ENCODE measurements at regions of chr19 and their contacts with region 1.

Region 1: GRCh38 chr19:58097781-58098681 is at the start of gene ZSCAN18:
- DNase-seq: peak; percentile 98
- ATAC-seq: peak; percentile 100
- H3K4me3 ChIP-seq: peak within 1 kb of the TSS; percentile 94
- H3K27ac ChIP-seq: peak within 1 kb of the TSS; percentile 83
- H3K4me1 ChIP-seq: peaks cover 4% of the 10 kb centered on the region
- H3K27me3 ChIP-seq: peaks cover 0 to 2% (median 0%) of the 10 kb centered on the region in 3 donors
- CTCF ChIP-seq: no peak
- total RNA-seq, gene ZSCAN18: 13.1 to 36.8 (median 16.3) TPM

Region 2: DNA sequence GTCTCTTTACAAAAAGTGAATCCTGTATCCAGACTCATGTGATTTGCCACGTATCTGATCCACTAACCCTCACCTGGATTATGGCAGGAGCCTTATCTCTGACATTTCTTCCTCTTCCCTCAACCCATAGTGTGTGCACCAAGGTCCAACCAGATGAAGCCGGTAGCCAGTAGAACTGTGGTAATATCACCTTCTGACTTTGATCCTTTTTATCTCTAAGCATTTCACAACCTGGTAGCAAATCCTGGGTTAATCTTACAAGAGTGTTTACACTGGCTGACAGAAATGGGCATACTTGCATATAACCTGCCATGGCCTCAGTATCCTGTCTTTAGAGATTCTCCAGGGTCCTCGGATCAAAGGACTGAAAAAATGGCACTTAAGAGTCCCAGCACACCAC is 183.5 kb before region 1 on chr19:
- intact Hi-C with region 1: no loop called
- DNase-seq: no peak
- ATAC-seq: no peak
- H3K4me3 ChIP-seq: no peak overlapping the region
- H3K27ac ChIP-seq: no peak overlapping the region
- H3K4me1 ChIP-seq: peaks cover 9% of the 10 kb centered on the region
- H3K27me3 ChIP-seq: no peaks in the 10 kb centered on the region
- CTCF ChIP-seq: no peak

Region 3: GRCh38 chr19:58009666-58010371 is 88.2 kb before region 1 on chr19:
- intact Hi-C with region 1: loop called in 1 of 2 experiments (anchors 5 kb)
- DNase-seq: peak; percentile 76 to 77
- ATAC-seq: peak; percentile 68 to 85 (median 78)
- H3K4me3 ChIP-seq: peak overlapping the region; percentile 44
- H3K27ac ChIP-seq: no peak overlapping the region
- H3K4me1 ChIP-seq: no peaks in the 10 kb centered on the region
- H3K27me3 ChIP-seq: peaks cover 0 to 17% (median 0%) of the 10 kb centered on the region in 3 donors
- CTCF ChIP-seq: no peak

Region 4: GRCh38 chr19:58059671-58060078 is 38.4 kb before region 1 on chr19:
- intact Hi-C with region 1: loop called in 1 of 2 experiments (anchors 2 kb)
- DNase-seq: peak in 1 of 2 donors; percentile 22
- ATAC-seq: peak in 1 of 4 donors; percentile 28
- H3K4me3 ChIP-seq: peak overlapping the region; percentile 82
- H3K27ac ChIP-seq: peak overlapping the region; percentile 91
- H3K4me1 ChIP-seq: no peaks in the 10 kb centered on the region
- H3K27me3 ChIP-seq: peaks cover 0 to 8% (median 0%) of the 10 kb centered on the region in 3 donors
- CTCF ChIP-seq: no peak

Region 5: GRCh38 chr19:58380722-58381466 is 282.9 kb after region 1 on chr19 and contains the start of gene ZNF837:
- intact Hi-C with region 1: no loop called
- DNase-seq: peak; percentile 98 to 99
- ATAC-seq: peak; percentile 90 to 95 (median 94)
- H3K4me3 ChIP-seq: peak within 1 kb of the TSS; percentile 76
- H3K27ac ChIP-seq: peak within 1 kb of the TSS; percentile 90
- H3K4me1 ChIP-seq: peaks cover 29% of the 10 kb centered on the region
- H3K27me3 ChIP-seq: no peaks in the 10 kb centered on the region
- CTCF ChIP-seq: no peak
- total RNA-seq, gene ZNF837: 0.10 to 0.34 (median 0.20) TPM

Measured in psoas muscle (tissue), 8 donors.